Endothelial cell of umbilical vein (primary cell): ENCODE measurements at regions of chr19 and their contacts with region 1.

Region 1: GRCh38 chr19:54159352-54160181 is at the start of gene LENG1:
- DNase-seq: peak; percentile 100
- H3K4me3 ChIP-seq: peak within 1 kb of the TSS; percentile 56 to 80 (median 77)
- H3K27ac ChIP-seq: peak within 1 kb of the TSS; percentile 71
- H3K4me1 ChIP-seq: peaks cover 18% of the 10 kb centered on the region
- H3K27me3 ChIP-seq: peaks cover 0 to 8% of the 10 kb centered on the region in 2 experiments
- CTCF ChIP-seq: peak; percentile 24 to 29
- POLR2A ChIP-seq: peak; percentile 83
- total RNA-seq, gene LENG1: 5.0 and 6.9 TPM in 2 replicates

Region 2: DNA sequence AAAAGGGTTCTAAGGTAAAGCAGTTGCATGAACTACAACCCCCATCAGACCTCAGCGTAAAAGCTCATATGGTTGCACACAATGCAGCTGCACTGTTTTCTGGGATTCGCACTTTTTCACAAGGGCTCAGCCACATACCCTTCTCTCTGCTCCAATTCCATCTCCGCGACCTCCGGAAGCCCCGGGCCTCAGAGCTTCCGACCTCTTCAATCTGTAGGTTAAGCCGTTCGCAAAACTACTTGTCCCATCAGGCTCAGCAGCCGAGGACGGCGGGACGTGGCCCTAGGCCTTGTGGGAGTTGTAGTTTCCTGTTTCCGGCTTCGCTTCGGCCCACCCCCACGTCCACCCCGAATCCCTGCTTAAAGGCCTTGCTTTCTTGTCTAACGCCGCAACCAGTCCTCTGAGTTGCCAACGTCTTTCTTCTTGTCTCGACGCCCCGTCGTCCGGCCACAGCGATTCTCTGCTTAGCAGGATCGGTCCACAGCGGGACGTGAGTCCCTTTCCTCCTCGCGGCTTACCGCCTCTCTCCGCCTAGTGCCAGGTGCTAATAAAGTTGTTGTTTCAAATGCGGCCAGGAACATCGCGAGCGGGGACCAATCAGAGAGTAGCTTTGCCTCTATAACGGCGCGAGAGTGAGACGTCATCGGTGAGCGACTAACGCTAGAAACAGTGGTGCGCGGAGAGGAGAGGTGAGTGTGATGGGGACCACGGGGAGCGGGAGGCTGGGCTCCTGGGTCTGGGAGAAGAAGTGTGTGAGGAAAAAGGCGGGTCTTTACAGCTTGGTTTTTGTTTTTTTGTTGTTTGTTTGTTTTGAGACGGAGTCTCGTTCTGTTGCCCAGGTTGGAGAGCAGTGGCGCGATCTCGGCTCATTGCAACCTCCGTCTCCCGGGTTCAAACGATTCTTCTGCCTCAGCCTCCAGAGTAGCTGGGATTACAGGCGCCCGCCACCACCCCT is 44.2 kb before region 1 on chr19 and contains the starts of genes PRPF31 and TFPT:
- CTCF ChIA-PET with region 1: interaction called, 3 read pairs
- POLR2A ChIA-PET with region 1: no interaction called
- dilution Hi-C with region 1: no loop called
- intact Hi-C with region 1: loop called (anchors 2 kb)
- DNase-seq: peak; percentile 98
- H3K4me3 ChIP-seq: peak within 1 kb of the TSS; percentile 51 to 81 (median 68)
- H3K27ac ChIP-seq: peak within 1 kb of the TSS; percentile 73
- H3K4me1 ChIP-seq: peaks cover 7% of the 10 kb centered on the region
- H3K27me3 ChIP-seq: no peaks in the 10 kb centered on the region
- CTCF ChIP-seq: no peak
- POLR2A ChIP-seq: peak; percentile 71
- total RNA-seq, gene PRPF31: 99.1 and 101 TPM in 2 replicates
- total RNA-seq, gene TFPT: 32.1 and 36.2 TPM in 2 replicates

Region 3: GRCh38 chr19:54137086-54137921 is 22.3 kb before region 1 on chr19 and contains the start of gene CNOT3:
- CTCF ChIA-PET with region 1: interaction called, 8 read pairs
- POLR2A ChIA-PET with region 1: interaction called, 3 read pairs
- dilution Hi-C with region 1: no loop called
- intact Hi-C with region 1: loop called (anchors 1 kb)
- DNase-seq: peak; percentile 100
- H3K4me3 ChIP-seq: peak within 1 kb of the TSS; percentile 66 to 98 (median 69)
- H3K27ac ChIP-seq: peak within 1 kb of the TSS; percentile 71
- H3K4me1 ChIP-seq: peaks cover 17% of the 10 kb centered on the region
- H3K27me3 ChIP-seq: no peaks in the 10 kb centered on the region
- CTCF ChIP-seq: no peak
- POLR2A ChIP-seq: peak; percentile 72
- total RNA-seq, gene CNOT3: 62.4 and 74.7 TPM in 2 replicates

Region 4: GRCh38 chr19:54149021-54149802 is 10.4 kb before region 1 on chr19:
- CTCF ChIA-PET with region 1: no interaction called
- POLR2A ChIA-PET with region 1: interaction called, 3 read pairs
- dilution Hi-C with region 1: no loop called
- intact Hi-C with region 1: loop called (anchors 1 kb)
- DNase-seq: peak; percentile 82
- H3K4me3 ChIP-seq: no peak overlapping the region
- H3K27ac ChIP-seq: peak overlapping the region; percentile 10
- H3K4me1 ChIP-seq: no peaks in the 10 kb centered on the region
- H3K27me3 ChIP-seq: no peaks in the 10 kb centered on the region
- CTCF ChIP-seq: no peak
- POLR2A ChIP-seq: peak; percentile 53

Region 5: GRCh38 chr19:54189735-54190502 is 30.4 kb after region 1 on chr19:
- CTCF ChIA-PET with region 1: interaction called, 4 read pairs
- POLR2A ChIA-PET with region 1: interaction called, 4 read pairs
- dilution Hi-C with region 1: no loop called
- intact Hi-C with region 1: loop called (anchors 1 kb)
- DNase-seq: peak; percentile 100
- H3K4me3 ChIP-seq: peak overlapping the region in 2 of 3 experiments; percentile 72 to 87
- H3K27ac ChIP-seq: peak overlapping the region; percentile 86
- H3K4me1 ChIP-seq: peaks cover 16% of the 10 kb centered on the region
- H3K27me3 ChIP-seq: no peaks in the 10 kb centered on the region
- CTCF ChIP-seq: no peak
- POLR2A ChIP-seq: peak; percentile 47

Region 6: GRCh38 chr19:54203151-54203611 is 43.6 kb after region 1 on chr19:
- CTCF ChIA-PET with region 1: interaction called, 3 read pairs
- POLR2A ChIA-PET with region 1: no interaction called
- dilution Hi-C with region 1: no loop called
- intact Hi-C with region 1: loop called (anchors 5 kb)
- DNase-seq: no peak
- H3K4me3 ChIP-seq: peak overlapping the region in 1 of 3 experiments; percentile 97
- H3K27ac ChIP-seq: no peak overlapping the region
- H3K4me1 ChIP-seq: peaks cover 42% of the 10 kb centered on the region
- H3K27me3 ChIP-seq: no peaks in the 10 kb centered on the region
- CTCF ChIP-seq: no peak
- POLR2A ChIP-seq: no peak